Sigmoid colon (tissue), 7 donors: ENCODE measurements at regions of chr5 and their contacts with region 1.

Region 1: GRCh38 chr5:141040771-141041426 is 10.3 kb upstream of the PCDHB1 start:
- DNase-seq: peak; percentile 96
- H3K4me3 ChIP-seq: peak overlapping the region; percentile 5 to 41 (median 37)
- H3K27ac ChIP-seq: peak overlapping the region; percentile 2 to 71 (median 44)
- H3K4me1 ChIP-seq: peaks cover 0 to 17% (median 15%) of the 10 kb centered on the region in 4 donors
- H3K27me3 ChIP-seq: peaks cover 0 to 8% (median 0%) of the 10 kb centered on the region in 3 donors
- CTCF ChIP-seq: peak in 3 of 4 experiments; percentile 60 to 64 (median 63)
- EP300 ChIP-seq: no peak
- POLR2A ChIP-seq: peak in 1 of 2 donors; percentile 28

Region 2: DNA sequence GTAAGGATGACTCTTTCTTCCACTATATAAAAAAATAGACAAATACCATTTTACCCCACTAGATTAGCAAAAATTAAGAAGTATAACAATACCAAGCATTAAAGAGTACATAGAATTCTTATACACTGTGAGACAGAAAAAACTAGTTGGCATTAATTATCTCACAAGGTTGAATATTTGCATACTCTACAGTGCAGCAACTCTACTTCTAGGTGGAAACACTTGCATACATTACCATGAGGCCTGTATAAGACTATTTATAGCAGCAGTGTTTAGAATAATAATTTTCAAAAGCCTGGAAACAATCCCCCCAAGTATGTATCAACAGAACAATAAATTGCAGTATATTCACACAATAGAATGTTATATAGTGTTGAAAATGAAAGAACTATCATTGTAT is 946.0 kb before region 1 on chr5:
- intact Hi-C with region 1: no loop called
- DNase-seq: no peak
- H3K4me3 ChIP-seq: no peak overlapping the region
- H3K27ac ChIP-seq: no peak overlapping the region
- H3K4me1 ChIP-seq: no peaks in the 10 kb centered on the region
- H3K27me3 ChIP-seq: no peaks in the 10 kb centered on the region
- CTCF ChIP-seq: no peak
- EP300 ChIP-seq: no peak
- POLR2A ChIP-seq: no peak

Region 3: GRCh38 chr5:140372971-140373487 is 667.9 kb before region 1 on chr5:
- intact Hi-C with region 1: loop called (anchors 5 kb)
- DNase-seq: peak; percentile 83
- H3K4me3 ChIP-seq: no peak overlapping the region
- H3K27ac ChIP-seq: no peak overlapping the region
- H3K4me1 ChIP-seq: peaks cover 0 to 6% (median 1%) of the 10 kb centered on the region in 4 donors
- H3K27me3 ChIP-seq: no peaks in the 10 kb centered on the region
- CTCF ChIP-seq: peak; percentile 46 to 84 (median 78)
- EP300 ChIP-seq: no peak
- POLR2A ChIP-seq: no peak

Region 4: DNA sequence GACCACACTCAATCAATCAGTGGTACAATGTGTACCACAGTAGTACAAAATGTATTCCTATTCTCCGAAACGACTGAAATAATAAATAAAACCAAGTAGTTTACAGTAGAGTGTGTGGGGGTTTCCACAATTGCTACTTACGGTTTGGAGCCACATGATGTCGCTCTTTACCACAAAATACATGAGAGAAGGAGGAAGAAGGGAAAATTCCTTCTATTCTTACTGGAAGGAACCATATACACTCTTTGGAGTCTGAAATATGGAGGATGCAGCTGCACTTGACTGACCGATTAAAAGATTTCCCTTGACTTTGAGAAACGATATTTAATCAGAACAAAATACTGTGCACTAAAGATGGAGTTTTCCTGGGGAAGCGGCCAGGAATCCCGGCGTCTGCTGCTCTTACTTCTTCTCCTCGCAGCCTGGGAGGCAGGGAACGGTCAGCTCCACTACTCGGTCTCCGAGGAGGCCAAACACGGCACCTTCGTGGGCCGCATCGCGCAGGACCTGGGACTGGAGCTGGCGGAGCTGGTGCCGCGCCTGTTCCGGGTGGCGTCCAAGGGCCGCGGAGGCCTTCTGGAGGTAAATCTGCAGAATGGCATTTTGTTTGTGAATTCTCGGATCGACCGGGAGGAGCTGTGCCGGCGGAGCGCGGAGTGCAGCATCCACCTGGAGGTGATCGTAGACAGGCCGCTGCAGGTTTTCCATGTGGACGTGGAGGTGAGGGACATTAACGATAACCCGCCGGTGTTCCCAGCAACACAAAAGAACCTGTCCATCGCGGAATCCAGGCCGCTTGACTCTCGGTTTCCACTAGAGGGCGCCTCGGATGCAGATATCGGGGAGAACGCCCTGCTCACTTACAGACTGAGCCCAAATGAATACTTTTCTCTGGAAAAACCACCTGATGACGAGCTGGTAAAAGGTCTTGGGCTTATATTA is 233.8 kb before region 1 on chr5 and contains the start of gene PCDHA4:
- intact Hi-C with region 1: loop called (anchors 5 kb)
- DNase-seq: no peak
- H3K4me3 ChIP-seq: peak within 1 kb of the TSS in 3 of 4 donors; percentile 35 to 43 (median 40)
- H3K27ac ChIP-seq: peak within 1 kb of the TSS in 2 of 4 donors; percentile 27 to 37
- H3K4me1 ChIP-seq: no peaks in the 10 kb centered on the region
- H3K27me3 ChIP-seq: peaks cover 0 to 33% (median 0%) of the 10 kb centered on the region in 3 donors
- CTCF ChIP-seq: peak in 1 of 4 experiments; percentile 22
- EP300 ChIP-seq: no peak
- POLR2A ChIP-seq: no peak
- total RNA-seq, gene PCDHA4: 1.1 to 1.2 (median 1.1) TPM

Region 5: DNA sequence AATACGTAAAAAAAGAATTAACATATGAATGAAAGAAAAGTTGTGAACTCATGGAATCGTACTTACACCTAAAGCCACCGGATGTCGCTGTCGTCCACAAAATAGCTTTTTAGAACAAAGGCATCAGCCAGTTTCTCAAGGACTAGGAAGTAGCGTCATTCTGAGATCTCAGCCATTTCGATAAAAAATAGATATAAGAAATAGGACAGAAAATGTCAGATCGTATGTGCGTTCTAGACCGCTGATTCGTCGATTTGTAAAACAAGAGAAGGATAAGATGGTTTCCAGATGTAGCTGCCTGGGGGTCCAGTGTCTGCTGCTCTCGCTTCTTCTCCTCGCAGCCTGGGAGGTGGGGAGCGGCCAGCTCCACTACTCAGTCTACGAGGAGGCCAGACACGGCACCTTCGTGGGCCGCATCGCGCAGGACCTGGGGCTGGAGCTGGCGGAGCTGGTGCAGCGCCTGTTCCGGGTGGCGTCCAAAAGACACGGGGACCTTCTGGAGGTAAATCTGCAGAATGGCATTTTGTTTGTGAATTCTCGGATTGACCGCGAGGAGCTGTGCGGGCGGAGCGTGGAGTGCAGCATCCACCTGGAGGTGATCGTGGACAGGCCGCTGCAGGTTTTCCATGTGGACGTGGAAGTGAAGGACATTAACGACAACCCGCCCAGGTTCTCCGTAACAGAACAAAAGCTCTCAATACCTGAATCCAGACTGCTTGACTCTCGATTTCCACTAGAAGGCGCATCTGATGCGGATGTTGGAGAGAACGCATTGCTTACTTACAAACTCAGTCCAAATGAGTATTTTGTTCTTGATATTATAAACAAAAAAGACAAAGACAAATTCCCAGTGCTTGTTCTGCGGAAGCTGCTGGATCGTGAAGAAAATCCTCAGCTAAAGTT is 184.9 kb before region 1 on chr5 and contains the start of gene PCDHA10:
- intact Hi-C with region 1: loop called (anchors 5 kb)
- DNase-seq: no peak
- H3K4me3 ChIP-seq: peak within 1 kb of the TSS in 3 of 4 donors; percentile 8 to 27 (median 21)
- H3K27ac ChIP-seq: no peak within 1 kb of the TSS
- H3K4me1 ChIP-seq: no peaks in the 10 kb centered on the region
- H3K27me3 ChIP-seq: peaks cover 0 to 65% (median 0%) of the 10 kb centered on the region in 3 donors
- CTCF ChIP-seq: no peak
- EP300 ChIP-seq: no peak
- POLR2A ChIP-seq: no peak
- total RNA-seq, gene PCDHA10: 0.27 to 2.5 (median 0.69) TPM

Region 6: DNA sequence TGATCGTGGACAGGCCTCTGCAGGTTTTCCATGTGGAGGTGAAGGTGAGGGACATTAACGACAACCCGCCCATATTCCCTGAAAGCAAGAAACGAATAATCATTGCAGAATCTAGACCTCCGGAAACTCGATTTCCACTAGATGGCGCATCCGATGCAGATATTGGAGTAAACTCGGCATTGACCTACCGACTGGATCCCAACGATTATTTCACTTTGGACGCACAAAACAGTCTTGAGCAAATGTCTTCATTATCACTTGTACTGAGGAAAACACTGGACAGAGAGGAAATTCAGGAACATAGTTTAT is 158.4 kb before region 1 on chr5:
- intact Hi-C with region 1: loop called (anchors 5 kb)
- DNase-seq: no peak
- H3K4me3 ChIP-seq: peak overlapping the region in 1 of 4 donors; percentile 22
- H3K27ac ChIP-seq: no peak overlapping the region
- H3K4me1 ChIP-seq: no peaks in the 10 kb centered on the region
- H3K27me3 ChIP-seq: peaks cover 0 to 64% (median 7%) of the 10 kb centered on the region in 3 donors
- CTCF ChIP-seq: no peak
- EP300 ChIP-seq: no peak
- POLR2A ChIP-seq: no peak

Region 7: DNA sequence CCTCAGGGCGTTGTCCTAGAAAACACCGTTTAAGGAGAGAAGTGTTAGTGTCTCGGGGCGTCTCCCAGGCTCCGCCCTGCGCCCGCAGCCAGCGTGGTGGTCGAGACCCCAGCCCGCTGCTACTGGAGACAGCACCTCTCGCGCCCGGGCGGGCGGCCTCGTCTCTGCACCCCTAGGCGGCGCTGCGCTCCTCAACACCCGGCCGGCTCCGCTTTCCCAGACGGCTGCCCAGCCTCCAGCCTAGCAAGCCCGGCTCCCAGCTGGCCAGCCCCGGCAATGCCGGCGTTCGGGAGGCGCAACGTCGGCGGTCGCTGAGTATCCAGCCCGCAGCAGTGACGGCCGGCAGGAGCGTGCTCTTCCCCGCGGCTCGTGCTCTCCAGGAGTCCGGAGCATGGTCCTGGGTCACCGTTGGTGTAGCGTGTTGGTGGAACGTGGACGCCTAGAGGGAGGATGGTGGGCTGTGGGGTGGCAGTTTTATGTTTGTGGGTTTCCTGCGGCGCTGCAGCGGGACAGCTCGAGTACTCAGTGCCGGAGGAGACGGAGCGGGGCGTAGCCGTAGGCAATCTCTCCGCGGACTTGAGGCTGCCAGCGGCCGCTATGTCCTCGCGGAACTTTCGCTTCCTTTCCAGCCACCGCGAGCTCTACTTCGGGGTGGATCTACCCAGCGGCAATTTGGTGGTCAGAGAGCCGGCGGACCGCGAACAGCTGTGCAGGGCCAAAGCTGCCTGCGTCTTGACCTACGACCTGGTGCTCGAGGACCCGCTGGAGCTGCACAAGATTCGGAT is 114.3 kb before region 1 on chr5:
- intact Hi-C with region 1: loop called (anchors 2 kb)
- DNase-seq: peak; percentile 85
- H3K4me3 ChIP-seq: peak overlapping the region; percentile 27 to 55 (median 46)
- H3K27ac ChIP-seq: peak overlapping the region in 2 of 4 donors; percentile 49 to 75
- H3K4me1 ChIP-seq: peaks cover 0 to 20% (median 15%) of the 10 kb centered on the region in 4 donors
- H3K27me3 ChIP-seq: peaks cover 0 to 45% (median 22%) of the 10 kb centered on the region in 3 donors
- CTCF ChIP-seq: peak; percentile 30 to 70 (median 40)
- EP300 ChIP-seq: no peak
- POLR2A ChIP-seq: no peak

Region 8: DNA sequence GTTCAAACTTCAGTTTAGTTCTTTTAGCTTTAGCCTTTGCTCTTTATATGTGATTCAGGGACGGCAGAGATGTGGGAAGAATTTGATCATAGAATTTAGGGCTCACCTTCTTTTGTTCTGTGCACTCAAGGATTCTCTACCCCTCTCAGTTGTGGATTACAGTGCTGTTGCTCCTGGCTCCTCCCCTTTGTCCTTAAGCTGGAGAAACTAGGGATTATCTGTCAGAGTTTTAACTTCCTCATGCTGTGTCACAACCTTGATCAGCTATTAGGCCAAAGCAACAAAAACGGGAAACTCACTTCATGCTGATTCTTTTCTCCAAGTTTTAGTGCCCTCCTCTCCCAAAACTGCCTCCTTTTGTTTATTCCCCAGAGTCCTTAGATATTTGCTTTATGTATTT is 87.7 kb before region 1 on chr5:
- intact Hi-C with region 1: no loop called
- DNase-seq: no peak
- H3K4me3 ChIP-seq: no peak overlapping the region
- H3K27ac ChIP-seq: no peak overlapping the region
- H3K4me1 ChIP-seq: no peaks in the 10 kb centered on the region
- H3K27me3 ChIP-seq: no peaks in the 10 kb centered on the region
- CTCF ChIP-seq: no peak
- EP300 ChIP-seq: no peak
- POLR2A ChIP-seq: no peak

Region 9: GRCh38 chr5:140966293-140967225 is 74.3 kb before region 1 on chr5 and contains the start of gene PCDHAC2:
- intact Hi-C with region 1: loop called (anchors 2 kb)
- DNase-seq: peak; percentile 71
- H3K4me3 ChIP-seq: peak within 1 kb of the TSS; percentile 40 to 67 (median 54)
- H3K27ac ChIP-seq: peak within 1 kb of the TSS; percentile 51 to 90 (median 60)
- H3K4me1 ChIP-seq: peaks cover 0 to 18% (median 11%) of the 10 kb centered on the region in 4 donors
- H3K27me3 ChIP-seq: peaks cover 0 to 15% (median 0%) of the 10 kb centered on the region in 3 donors
- CTCF ChIP-seq: no peak
- EP300 ChIP-seq: no peak
- POLR2A ChIP-seq: no peak
- total RNA-seq, gene PCDHAC2: 1.3 to 3.0 (median 2.2) TPM